Transverse colon (tissue), 4 donors: ENCODE measurements at regions of chr4 and their contacts with region 1.

Region 1: DNA sequence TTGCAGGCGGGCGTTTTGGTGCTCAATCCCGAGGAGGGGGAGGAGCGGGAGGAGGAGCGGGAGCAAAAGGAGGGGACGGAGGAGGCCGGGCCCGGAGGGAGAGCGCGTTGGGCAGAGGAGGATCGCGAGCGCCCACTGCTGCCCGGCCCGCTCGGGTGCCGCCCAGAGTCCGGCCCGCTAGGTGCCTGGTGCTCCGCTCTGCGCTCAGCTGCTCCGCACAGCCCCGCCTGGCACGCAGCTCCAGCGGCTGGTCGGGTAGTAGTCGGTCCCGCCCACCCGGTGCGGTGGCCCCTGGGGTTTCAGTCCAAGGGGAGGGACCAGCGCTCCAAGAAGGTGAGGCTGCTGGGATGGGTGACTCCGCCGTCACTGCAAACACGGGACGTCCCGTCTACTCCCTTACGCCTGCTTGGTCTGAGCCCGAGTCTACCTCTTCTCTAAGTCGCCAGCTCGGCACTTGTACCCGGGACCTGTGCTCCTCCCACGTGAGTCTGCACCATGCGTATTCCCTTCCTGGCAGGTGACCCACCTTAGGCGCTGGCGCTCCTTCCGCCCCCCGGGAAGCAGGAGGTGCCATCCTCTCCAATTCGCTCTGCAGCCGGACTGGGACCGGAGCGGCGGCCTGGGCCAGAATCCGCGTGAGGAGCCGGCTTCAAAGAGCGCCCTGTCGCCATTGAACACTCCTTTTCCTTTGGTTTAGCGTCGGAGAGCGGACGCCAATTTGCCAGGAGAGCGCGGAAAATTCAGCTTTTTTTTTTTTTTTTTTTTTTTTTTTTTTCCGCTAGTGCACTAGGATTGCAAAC is 405 bp upstream of the HS3ST1 start:
- DNase-seq: peak; percentile 91
- H3K4me3 ChIP-seq: peak overlapping the region; percentile 5 to 75 (median 58)
- H3K27ac ChIP-seq: peak overlapping the region; percentile 77 to 83 (median 81)
- H3K4me1 ChIP-seq: peaks cover 0 to 20% (median 8%) of the 10 kb centered on the region in 4 donors
- H3K27me3 ChIP-seq: peaks cover 11% of the 10 kb centered on the region
- CTCF ChIP-seq: peak; percentile 59 to 89 (median 75)
- EP300 ChIP-seq: no peak
- POLR2A ChIP-seq: peak; percentile 78

Region 2: GRCh38 chr4:10582059-10582686 is 846.9 kb before region 1 on chr4:
- in situ Hi-C with region 1: loop called in 2 of 4 experiments (anchors 10 to 25 kb)
- intact Hi-C with region 1: no loop called
- DNase-seq: peak; percentile 36
- H3K4me3 ChIP-seq: no peak overlapping the region
- H3K27ac ChIP-seq: no peak overlapping the region
- H3K4me1 ChIP-seq: peaks cover 0 to 5% (median 2%) of the 10 kb centered on the region in 4 donors
- H3K27me3 ChIP-seq: no peaks in the 10 kb centered on the region
- CTCF ChIP-seq: peak; percentile 70 to 86 (median 85)
- EP300 ChIP-seq: no peak
- POLR2A ChIP-seq: no peak

Region 3: GRCh38 chr4:11455201-11455835 is 26.2 kb after region 1 on chr4:
- in situ Hi-C with region 1: no loop called
- intact Hi-C with region 1: loop called (anchors 1 kb)
- DNase-seq: peak; percentile 37
- H3K4me3 ChIP-seq: no peak overlapping the region
- H3K27ac ChIP-seq: peak overlapping the region; percentile 42 to 60 (median 56)
- H3K4me1 ChIP-seq: peaks cover 0 to 10% (median 2%) of the 10 kb centered on the region in 4 donors
- H3K27me3 ChIP-seq: no peaks in the 10 kb centered on the region
- CTCF ChIP-seq: no peak
- EP300 ChIP-seq: no peak
- POLR2A ChIP-seq: no peak